ENCODE measurements at regions of chr6 and their contacts with region 1.

Region 1: GRCh38 chr6:15735567-15736265 is 72.9 kb upstream of the DTNBP1 start:
- DNase-seq: no peak
- H3K4me3 Mint-ChIP-seq: no peak overlapping the region
- H3K27ac Mint-ChIP-seq: peak overlapping the region; percentile 43
- H3K4me1 Mint-ChIP-seq: peaks cover 47% of the 10 kb centered on the region
- H3K27me3 Mint-ChIP-seq: peaks cover 2% of the 10 kb centered on the region

Region 2: DNA sequence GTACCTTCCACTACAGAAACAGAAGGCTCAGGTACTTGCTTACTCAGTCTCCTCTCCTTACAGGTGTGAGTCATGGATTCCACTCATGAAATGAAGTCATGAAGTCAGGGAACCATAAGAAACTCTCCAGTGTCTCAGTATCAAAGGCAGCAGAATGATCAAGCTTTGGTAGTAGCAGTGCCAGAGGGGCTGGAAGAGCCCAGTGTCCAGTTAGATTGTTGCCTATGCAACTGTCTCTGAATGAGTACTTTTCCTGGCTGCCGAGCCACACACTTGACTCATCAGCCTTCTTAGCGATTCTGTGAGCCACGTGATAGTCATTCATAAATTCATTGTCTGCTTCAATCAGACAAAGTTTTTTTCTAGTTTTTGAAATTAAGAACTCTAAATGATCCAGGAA is 20.7 kb before region 1 on chr6:
- CTCF ChIA-PET with region 1: interaction called, 3 read pairs
- intact Hi-C with region 1: loop called (anchors 1 kb)
- DNase-seq: peak; percentile 68
- H3K4me3 Mint-ChIP-seq: no peak overlapping the region
- H3K27ac Mint-ChIP-seq: peak overlapping the region; percentile 39
- H3K4me1 Mint-ChIP-seq: peaks cover 22% of the 10 kb centered on the region
- H3K27me3 Mint-ChIP-seq: peaks cover 2% of the 10 kb centered on the region